ENCODE measurements at regions of chr22 and their contacts with region 1.

Region 1: GRCh38 chr22:29603358-29604075 is at the start of gene NF2:
- DNase-seq: peak; percentile 96 to 100 (median 98)
- ATAC-seq: peak; percentile 98
- H3K4me3 ChIP-seq: peak within 1 kb of the TSS; percentile 77 to 86
- H3K4me3 Mint-ChIP-seq: peak within 1 kb of the TSS; percentile 93
- H3K27ac ChIP-seq: peak within 1 kb of the TSS; percentile 84 to 90
- H3K27ac Mint-ChIP-seq: peak within 1 kb of the TSS; percentile 97
- H3K4me1 ChIP-seq: peaks cover 18% of the 10 kb centered on the region
- H3K4me1 Mint-ChIP-seq: peaks cover 25% of the 10 kb centered on the region
- H3K27me3 ChIP-seq: no peaks in the 10 kb centered on the region
- H3K27me3 Mint-ChIP-seq: no peaks in the 10 kb centered on the region
- CTCF ChIP-seq: no peak
- total RNA-seq, gene NF2: 22.6 to 23.2 TPM

Region 2: GRCh38 chr22:29553351-29554224 is 49.9 kb before region 1 on chr22 and contains the start of gene THOC5:
- CTCF ChIA-PET with region 1: no interaction called
- POLR2A ChIA-PET with region 1: interaction called, 10 read pairs
- intact Hi-C with region 1: loop called (anchors 1 kb)
- DNase-seq: peak; percentile 73 to 94 (median 91)
- ATAC-seq: peak; percentile 95
- H3K4me3 ChIP-seq: peak within 1 kb of the TSS; percentile 57 to 94
- H3K4me3 Mint-ChIP-seq: peak within 1 kb of the TSS; percentile 88
- H3K27ac ChIP-seq: peak within 1 kb of the TSS; percentile 61 to 66
- H3K27ac Mint-ChIP-seq: peak within 1 kb of the TSS; percentile 96
- H3K4me1 ChIP-seq: peaks cover 7% of the 10 kb centered on the region
- H3K4me1 Mint-ChIP-seq: peaks cover 27% of the 10 kb centered on the region
- H3K27me3 ChIP-seq: no peaks in the 10 kb centered on the region
- H3K27me3 Mint-ChIP-seq: no peaks in the 10 kb centered on the region
- CTCF ChIP-seq: no peak
- total RNA-seq, gene THOC5: 33.5 to 35.0 TPM

Region 3: DNA sequence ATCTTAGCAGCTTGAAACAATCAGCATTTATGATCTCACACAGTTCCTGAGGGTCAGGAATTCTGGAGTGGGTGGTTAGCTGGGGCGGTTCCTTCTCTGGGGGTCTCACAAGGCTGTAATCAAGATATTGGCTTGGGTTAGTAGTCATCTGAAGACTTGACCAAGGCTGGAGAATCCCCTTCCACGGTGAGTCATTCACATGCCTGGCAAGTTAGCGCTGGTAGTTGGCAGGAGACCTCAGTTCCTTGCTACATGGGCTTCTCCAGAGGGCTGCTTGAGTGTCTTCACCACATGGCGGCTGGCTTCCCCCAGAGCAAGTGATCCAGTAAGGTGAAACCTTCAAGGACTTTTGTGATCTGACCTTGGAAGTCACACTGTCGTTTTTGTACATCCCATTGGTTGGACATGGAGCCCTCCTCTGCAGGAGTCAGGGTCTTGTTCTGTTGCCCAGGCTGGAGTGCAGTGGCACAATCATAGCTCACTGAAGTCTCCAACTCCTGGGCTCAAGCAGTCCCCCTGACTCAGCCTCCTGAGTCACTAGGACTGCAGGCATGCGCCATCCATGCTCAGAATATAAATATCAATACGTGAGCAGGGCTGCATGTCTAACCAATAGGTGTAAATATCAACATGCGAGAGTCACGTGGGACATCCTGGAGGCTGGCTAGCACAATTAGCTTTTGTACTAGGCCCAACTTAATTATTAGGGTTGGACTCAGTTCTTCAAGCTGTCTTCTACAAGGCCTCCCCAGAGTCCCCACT is 15.4 kb before region 1 on chr22:
- CTCF ChIA-PET with region 1: interaction called, 21 read pairs
- POLR2A ChIA-PET with region 1: interaction called, 5 read pairs
- intact Hi-C with region 1: loop called in 1 of 2 experiments (anchors 1 kb)
- DNase-seq: no peak
- ATAC-seq: no peak
- H3K4me3 ChIP-seq: no peak overlapping the region
- H3K4me3 Mint-ChIP-seq: no peak overlapping the region
- H3K27ac ChIP-seq: no peak overlapping the region
- H3K27ac Mint-ChIP-seq: peak overlapping the region; percentile 37
- H3K4me1 ChIP-seq: peaks cover 6% of the 10 kb centered on the region
- H3K4me1 Mint-ChIP-seq: peaks cover 9% of the 10 kb centered on the region
- H3K27me3 ChIP-seq: no peaks in the 10 kb centered on the region
- H3K27me3 Mint-ChIP-seq: no peaks in the 10 kb centered on the region
- CTCF ChIP-seq: no peak

Region 4: GRCh38 chr22:29837780-29838598 is 234.5 kb after region 1 on chr22 and contains the start of gene ASCC2:
- CTCF ChIA-PET with region 1: no interaction called
- POLR2A ChIA-PET with region 1: interaction called, 3 read pairs
- intact Hi-C with region 1: loop called (anchors 1 kb)
- DNase-seq: peak; percentile 97 to 100 (median 99)
- ATAC-seq: peak; percentile 98
- H3K4me3 ChIP-seq: peak within 1 kb of the TSS; percentile 76 to 85
- H3K4me3 Mint-ChIP-seq: peak within 1 kb of the TSS; percentile 92
- H3K27ac ChIP-seq: peak within 1 kb of the TSS; percentile 55 to 85
- H3K27ac Mint-ChIP-seq: peak within 1 kb of the TSS; percentile 97
- H3K4me1 ChIP-seq: peaks cover 15% of the 10 kb centered on the region
- H3K4me1 Mint-ChIP-seq: peaks cover 43% of the 10 kb centered on the region
- H3K27me3 ChIP-seq: no peaks in the 10 kb centered on the region
- H3K27me3 Mint-ChIP-seq: no peaks in the 10 kb centered on the region
- CTCF ChIP-seq: no peak
- total RNA-seq, gene ASCC2: 66.2 to 76.5 TPM

Region 5: DNA sequence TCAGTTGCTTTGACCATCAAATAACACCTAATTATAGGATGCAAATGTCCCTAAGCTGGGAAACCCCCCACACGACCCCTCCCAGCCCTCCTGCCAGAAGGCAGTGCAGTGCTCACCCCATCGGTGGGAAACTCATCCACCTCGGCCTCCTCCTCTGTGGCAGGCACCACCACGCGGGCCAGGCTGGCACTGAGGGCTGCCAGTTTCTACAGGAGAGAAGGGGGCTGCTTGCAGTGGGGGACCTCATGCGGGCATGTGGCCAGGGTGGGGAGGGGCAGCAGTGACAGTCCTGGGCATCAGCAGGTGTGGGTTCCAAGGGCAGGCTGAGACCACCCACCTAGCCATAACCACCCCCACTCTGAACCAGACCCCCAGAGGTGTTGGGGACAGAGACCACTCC is 977.4 kb after region 1 on chr22:
- CTCF ChIA-PET with region 1: no interaction called
- POLR2A ChIA-PET with region 1: no interaction called
- intact Hi-C with region 1: no loop called
- DNase-seq: no peak
- ATAC-seq: no peak
- H3K4me3 ChIP-seq: no peak overlapping the region
- H3K4me3 Mint-ChIP-seq: no peak overlapping the region
- H3K27ac ChIP-seq: no peak overlapping the region
- H3K27ac Mint-ChIP-seq: no peak overlapping the region
- H3K4me1 ChIP-seq: no peaks in the 10 kb centered on the region
- H3K4me1 Mint-ChIP-seq: peaks cover 4% of the 10 kb centered on the region
- H3K27me3 ChIP-seq: no peaks in the 10 kb centered on the region
- H3K27me3 Mint-ChIP-seq: no peaks in the 10 kb centered on the region
- CTCF ChIP-seq: no peak

Region 6: GRCh38 chr22:30591588-30592359 is 988.3 kb after region 1 on chr22 and contains the start of gene PES1:
- CTCF ChIA-PET with region 1: no interaction called
- POLR2A ChIA-PET with region 1: no interaction called
- intact Hi-C with region 1: loop called in 1 of 2 experiments (anchors 5 kb)
- DNase-seq: peak; percentile 90 to 99 (median 95)
- ATAC-seq: peak; percentile 96
- H3K4me3 ChIP-seq: peak within 1 kb of the TSS; percentile 79 to 80
- H3K4me3 Mint-ChIP-seq: no peak within 1 kb of the TSS
- H3K27ac ChIP-seq: peak within 1 kb of the TSS; percentile 89 to 97
- H3K27ac Mint-ChIP-seq: no peak within 1 kb of the TSS
- H3K4me1 ChIP-seq: peaks cover 15% of the 10 kb centered on the region
- H3K4me1 Mint-ChIP-seq: no peaks in the 10 kb centered on the region
- H3K27me3 ChIP-seq: no peaks in the 10 kb centered on the region
- H3K27me3 Mint-ChIP-seq: peaks cover 13% of the 10 kb centered on the region
- CTCF ChIP-seq: no peak
- total RNA-seq, gene PES1: 39.7 to 47.0 TPM